SK-N-SH (cell line): ENCODE measurements at regions of chr1 and their contacts with region 1.

Region 1: DNA sequence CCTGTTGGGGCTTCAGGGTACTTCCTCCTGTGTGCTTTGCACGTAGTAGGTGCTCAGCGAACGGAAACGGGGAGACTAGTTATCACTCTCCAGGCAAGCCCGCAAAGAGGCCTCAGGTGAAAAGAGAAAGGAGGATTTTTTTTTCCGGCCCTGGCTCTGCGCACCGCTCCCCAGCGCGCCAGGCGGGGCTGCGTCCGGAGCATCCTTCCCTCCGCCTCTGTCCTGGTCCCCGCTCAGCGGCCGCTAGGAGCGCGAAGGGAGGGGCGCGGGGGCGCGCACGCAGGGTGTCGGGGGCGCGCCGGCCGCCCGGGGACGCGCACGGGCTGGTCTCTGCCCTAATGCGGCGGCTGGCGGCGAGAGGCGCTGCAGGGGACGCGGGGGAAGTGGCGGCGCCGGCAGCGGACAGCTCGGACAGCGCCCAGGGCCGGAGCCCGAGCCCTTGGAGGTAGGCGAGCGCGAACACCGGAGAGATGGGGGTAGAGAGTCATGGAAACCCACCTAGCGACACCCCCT is 42.3 kb upstream of the NFASC start:
- DNase-seq: peak; percentile 98
- H3K4me3 ChIP-seq: peak overlapping the region; percentile 49 to 54
- H3K27ac ChIP-seq: no peak overlapping the region
- H3K4me1 ChIP-seq: peaks cover 0 to 11% of the 10 kb centered on the region in 2 experiments; a peak in 1 of 4 replicates
- H3K27me3 ChIP-seq: no peaks in the 10 kb centered on the region; the same call in 1 of the 2 replicates
- CTCF ChIP-seq: peak; percentile 26
- EP300 ChIP-seq: no peak
- RAD21 ChIP-seq: no peak

Region 2: DNA sequence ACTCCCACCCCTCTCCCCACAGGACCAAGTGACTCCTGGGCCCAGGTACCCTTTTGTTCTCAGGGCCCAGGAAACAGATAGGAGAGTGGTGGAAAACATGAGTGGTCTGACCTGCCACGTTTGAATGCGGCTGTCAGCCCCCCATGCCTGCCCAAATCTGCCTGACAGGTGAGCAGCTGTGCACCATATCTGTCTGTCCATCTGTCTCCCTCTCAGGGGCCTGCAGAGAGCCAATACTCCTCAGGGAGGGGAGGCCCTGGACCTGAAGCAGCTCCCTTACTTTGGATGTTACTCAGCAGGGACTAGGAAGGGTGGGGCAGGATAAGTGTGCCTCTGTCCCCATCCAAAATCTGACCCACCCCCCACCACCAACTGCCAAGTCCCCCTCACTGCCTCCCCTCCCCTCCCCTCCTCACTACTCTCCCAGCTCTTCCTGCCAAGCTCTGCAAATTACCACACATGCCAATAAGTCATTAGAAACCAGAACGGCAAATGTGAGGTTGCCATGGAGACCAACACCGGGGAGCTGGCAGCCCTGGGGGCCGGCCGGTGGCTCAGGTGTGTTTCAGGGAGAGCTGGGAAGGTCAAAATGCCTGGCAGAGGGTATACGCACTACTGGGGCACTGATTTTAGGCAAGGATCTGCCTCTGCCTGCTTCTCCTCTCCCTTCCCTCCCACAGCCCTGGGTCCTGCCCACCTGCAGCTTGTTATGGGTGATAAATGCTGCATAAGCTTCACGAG is 154.3 kb before region 1 on chr1:
- CTCF ChIA-PET with region 1: no interaction called
- POLR2A ChIA-PET with region 1: no interaction called
- DNase-seq: peak; percentile 41
- H3K4me3 ChIP-seq: no peak overlapping the region
- H3K27ac ChIP-seq: no peak overlapping the region
- H3K4me1 ChIP-seq: peaks cover 0 to 7% of the 10 kb centered on the region in 2 experiments; a peak in 1 of 4 replicates
- H3K27me3 ChIP-seq: peaks cover 24% of the 10 kb centered on the region; the same call in 1 of the 2 replicates
- CTCF ChIP-seq: no peak
- EP300 ChIP-seq: no peak
- RAD21 ChIP-seq: no peak

Region 3: GRCh38 chr1:204846546-204847167 is 18.3 kb after region 1 on chr1:
- CTCF ChIA-PET with region 1: interaction called, 10 read pairs
- POLR2A ChIA-PET with region 1: no interaction called
- DNase-seq: no peak
- H3K4me3 ChIP-seq: no peak overlapping the region
- H3K27ac ChIP-seq: no peak overlapping the region
- H3K4me1 ChIP-seq: no peaks in the 10 kb centered on the region
- H3K27me3 ChIP-seq: no peaks in the 10 kb centered on the region
- CTCF ChIP-seq: no peak
- EP300 ChIP-seq: no peak
- RAD21 ChIP-seq: no peak